Naive thymus-derived CD4-positive, alpha-beta T cell (primary cell): ENCODE measurements at regions of chr10 and their contacts with region 1.

Region 1: GRCh38 chr10:23535381-23535780 is 96.5 kb downstream of the OTUD1 start:
- DNase-seq: no peak
- ATAC-seq: no peak
- H3K4me3 ChIP-seq: no peak overlapping the region
- H3K4me3 Mint-ChIP-seq: no peak overlapping the region
- H3K27ac ChIP-seq: no peak overlapping the region
- H3K27ac Mint-ChIP-seq: peak overlapping the region in 4 of 9 donors; percentile 42 to 66 (median 48)
- H3K4me1 ChIP-seq: peaks cover 0 to 30% of the 10 kb centered on the region in 2 donors
- H3K4me1 Mint-ChIP-seq: peaks cover 34 to 78% (median 55%) of the 10 kb centered on the region in 7 donors
- H3K27me3 ChIP-seq: no peaks in the 10 kb centered on the region
- H3K27me3 Mint-ChIP-seq: no peaks in the 10 kb centered on the region

Region 2: GRCh38 chr10:23702977-23703414 is 167.6 kb after region 1 on chr10:
- CTCF ChIA-PET with region 1: no interaction called
- POLR2A ChIA-PET with region 1: no interaction called
- intact Hi-C with region 1: loop called (anchors 5 kb)
- DNase-seq: peak in 7 of 9 donors; percentile 39 to 68 (median 61)
- ATAC-seq: peak; percentile 78
- H3K4me3 ChIP-seq: no peak overlapping the region
- H3K4me3 Mint-ChIP-seq: peak overlapping the region in 8 of 10 donors; percentile 7 to 62 (median 50)
- H3K27ac ChIP-seq: no peak overlapping the region
- H3K27ac Mint-ChIP-seq: peak overlapping the region in 1 of 9 donors; percentile 47
- H3K4me1 ChIP-seq: no peaks in the 10 kb centered on the region
- H3K4me1 Mint-ChIP-seq: peaks cover 3 to 15% (median 12%) of the 10 kb centered on the region in 7 donors
- H3K27me3 ChIP-seq: peaks cover 0 to 4% of the 10 kb centered on the region in 2 donors
- H3K27me3 Mint-ChIP-seq: peaks cover 22 to 40% (median 26%) of the 10 kb centered on the region in 5 donors